PC-9 (cell line): ENCODE measurements at regions of chr1 and their contacts with region 1.

Region 1: GRCh38 chr1:54488779-54489626 is 59.0 kb upstream of the ACOT11 start:
- DNase-seq: peak; percentile 51 to 87
- H3K4me3 ChIP-seq: peak overlapping the region; percentile 64
- H3K27ac ChIP-seq: peak overlapping the region; percentile 28; the same call in 1 of the 2 replicates
- H3K4me1 ChIP-seq: peaks cover 5% of the 10 kb centered on the region; the same call in 1 of the 2 replicates
- H3K27me3 ChIP-seq: no peaks in the 10 kb centered on the region
- CTCF ChIP-seq: peak; percentile 97

Region 2: DNA sequence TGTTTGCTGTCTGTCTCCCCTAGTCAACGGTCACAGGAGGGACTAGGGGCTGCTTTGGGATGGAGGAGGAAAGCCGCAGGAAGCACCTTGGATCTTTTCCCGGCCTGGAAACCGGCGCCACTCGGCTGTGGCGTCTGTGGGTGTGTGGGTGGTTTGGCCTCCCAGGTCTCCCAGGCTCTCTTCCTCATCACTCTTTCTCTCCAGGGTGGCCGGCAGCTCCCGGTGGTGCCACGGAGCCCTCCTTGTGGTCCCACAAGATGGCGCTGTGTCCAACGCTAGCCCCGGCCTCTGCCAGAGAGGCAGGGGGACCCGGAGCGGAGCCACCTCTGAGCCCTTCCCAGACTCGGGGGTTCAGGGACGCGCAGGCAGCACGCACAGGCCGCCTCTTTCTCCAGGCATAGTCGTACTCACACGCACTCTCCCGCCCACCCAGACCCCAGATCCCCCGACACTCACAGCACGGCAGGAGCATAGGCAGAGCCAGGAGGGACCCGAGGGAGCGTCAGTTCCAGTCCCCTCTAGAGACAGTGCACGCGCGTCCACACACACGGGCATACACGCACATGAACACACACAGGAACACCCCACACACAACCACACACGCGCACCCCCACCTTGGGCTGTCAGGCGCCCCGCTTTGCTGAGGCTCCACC is 367.4 kb before region 1 on chr1:
- CTCF ChIA-PET with region 1: interaction called, 14 read pairs
- POLR2A ChIA-PET with region 1: no interaction called
- intact Hi-C with region 1: loop called (anchors 1 kb)
- DNase-seq: peak in 1 of 2 experiments; percentile 85
- H3K4me3 ChIP-seq: no peak overlapping the region
- H3K27ac ChIP-seq: no peak overlapping the region
- H3K4me1 ChIP-seq: no peaks in the 10 kb centered on the region
- H3K27me3 ChIP-seq: peaks cover 12% of the 10 kb centered on the region; the same call in 1 of the 2 replicates
- CTCF ChIP-seq: peak; percentile 73

Region 3: GRCh38 chr1:54310439-54311328 is 178.3 kb before region 1 on chr1:
- CTCF ChIA-PET with region 1: interaction called, 14 read pairs
- POLR2A ChIA-PET with region 1: no interaction called
- intact Hi-C with region 1: no loop called
- DNase-seq: no peak
- H3K4me3 ChIP-seq: no peak overlapping the region
- H3K27ac ChIP-seq: no peak overlapping the region
- H3K4me1 ChIP-seq: no peaks in the 10 kb centered on the region
- H3K27me3 ChIP-seq: no peaks in the 10 kb centered on the region
- CTCF ChIP-seq: peak; percentile 51

Region 4: DNA sequence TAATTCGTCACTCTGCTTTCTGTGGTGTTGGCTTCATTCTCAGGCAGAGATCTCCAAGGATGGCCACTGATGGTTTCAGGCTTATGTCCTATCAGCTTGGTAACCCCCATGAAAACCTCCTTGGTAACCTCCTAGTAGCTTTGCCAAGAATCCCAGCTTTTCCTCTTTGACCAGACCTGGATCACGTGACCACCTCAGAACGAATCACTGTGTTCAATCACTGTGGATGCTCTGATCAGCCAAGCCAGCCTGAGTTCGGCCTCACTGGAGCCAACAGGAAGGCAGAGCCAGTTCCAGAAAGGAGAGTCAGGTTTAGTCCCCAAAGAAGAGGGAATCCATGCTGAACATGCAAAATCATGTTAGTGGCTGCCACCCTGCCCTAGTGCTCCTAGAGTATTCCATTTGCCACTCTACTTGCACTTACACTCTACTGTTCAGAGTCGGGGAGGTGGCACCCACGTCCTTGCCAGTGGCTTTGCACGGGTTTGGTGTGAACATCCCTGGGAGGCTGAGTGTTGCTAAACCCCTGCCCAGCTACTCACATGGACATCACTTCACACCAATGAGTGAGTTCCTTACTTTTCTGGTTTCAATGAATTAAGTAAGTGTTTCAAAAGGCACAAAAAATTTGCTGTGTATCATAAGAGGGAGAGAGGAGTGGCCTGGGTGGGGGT is 49.3 kb before region 1 on chr1:
- CTCF ChIA-PET with region 1: no interaction called
- POLR2A ChIA-PET with region 1: no interaction called
- intact Hi-C with region 1: no loop called
- DNase-seq: no peak
- H3K4me3 ChIP-seq: no peak overlapping the region
- H3K27ac ChIP-seq: no peak overlapping the region
- H3K4me1 ChIP-seq: 0 out of 2 replicates have a peak, but pooled peaks cover 4% of the 10 kb centered on the region
- H3K27me3 ChIP-seq: no peaks in the 10 kb centered on the region
- CTCF ChIP-seq: no peak

Region 5: DNA sequence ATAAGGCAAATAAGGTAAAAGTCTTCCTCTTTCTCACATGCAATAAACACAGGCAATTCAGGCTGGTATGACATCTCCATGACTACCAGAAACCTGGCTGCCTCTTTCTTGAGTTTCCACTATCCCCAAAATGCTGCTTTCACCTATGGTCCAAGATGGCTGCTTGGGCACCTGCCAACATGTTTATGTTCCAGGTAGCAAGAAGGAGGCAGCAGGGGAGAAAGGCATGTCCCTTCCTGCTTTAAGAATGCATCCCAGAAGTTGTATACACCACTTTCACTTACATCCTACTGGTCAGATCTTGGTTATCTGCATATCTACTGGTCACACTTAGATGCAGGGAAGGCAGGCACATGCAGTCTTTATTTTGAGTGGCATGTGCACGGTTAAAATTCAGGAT is 39.6 kb after region 1 on chr1:
- CTCF ChIA-PET with region 1: interaction called, 14 read pairs
- POLR2A ChIA-PET with region 1: no interaction called
- intact Hi-C with region 1: no loop called
- DNase-seq: no peak
- H3K4me3 ChIP-seq: no peak overlapping the region
- H3K27ac ChIP-seq: no peak overlapping the region
- H3K4me1 ChIP-seq: no peaks in the 10 kb centered on the region
- H3K27me3 ChIP-seq: no peaks in the 10 kb centered on the region
- CTCF ChIP-seq: no peak

Region 6: GRCh38 chr1:54800899-54801759 is 312.1 kb after region 1 on chr1 and contains the start of gene TTC22:
- CTCF ChIA-PET with region 1: interaction called, 5 read pairs
- POLR2A ChIA-PET with region 1: no interaction called
- intact Hi-C with region 1: loop called (anchors 2 kb)
- DNase-seq: peak; percentile 72 to 87
- H3K4me3 ChIP-seq: peak within 1 kb of the TSS; percentile 86
- H3K27ac ChIP-seq: peak within 1 kb of the TSS; percentile 76
- H3K4me1 ChIP-seq: peaks cover 79% of the 10 kb centered on the region
- H3K27me3 ChIP-seq: no peaks in the 10 kb centered on the region
- CTCF ChIP-seq: peak; percentile 72
- total RNA-seq, gene TTC22: 24.1 and 26.3 TPM in 2 replicates